ENCODE measurements at regions of chr15 and their contacts with region 1.

Region 1: GRCh38 chr15:58758138-58758537 is 8.6 kb upstream of the ADAM10 start:
- DNase-seq: no peak
- ATAC-seq: no peak
- H3K4me3 ChIP-seq: no peak overlapping the region
- H3K4me3 Mint-ChIP-seq: no peak overlapping the region
- H3K27ac ChIP-seq: no peak overlapping the region
- H3K27ac Mint-ChIP-seq: no peak overlapping the region
- H3K4me1 ChIP-seq: no peaks in the 10 kb centered on the region
- H3K4me1 Mint-ChIP-seq: no peaks in the 10 kb centered on the region
- H3K27me3 ChIP-seq: no peaks in the 10 kb centered on the region
- H3K27me3 Mint-ChIP-seq: peaks cover 2% of the 10 kb centered on the region
- CTCF ChIP-seq: no peak

Region 2: GRCh38 chr15:58269455-58270414 is 488.4 kb before region 1 on chr15:
- CTCF ChIA-PET with region 1: no interaction called
- POLR2A ChIA-PET with region 1: no interaction called
- intact Hi-C with region 1: loop called (anchors 1 to 10 kb)
- DNase-seq: peak in 6 of 9 experiments; percentile 11 to 68 (median 35)
- ATAC-seq: no peak
- H3K4me3 ChIP-seq: no peak overlapping the region
- H3K4me3 Mint-ChIP-seq: no peak overlapping the region
- H3K27ac ChIP-seq: no peak overlapping the region
- H3K27ac Mint-ChIP-seq: no peak overlapping the region
- H3K4me1 ChIP-seq: peaks cover 4% of the 10 kb centered on the region
- H3K4me1 Mint-ChIP-seq: peaks cover 9% of the 10 kb centered on the region
- H3K27me3 ChIP-seq: no peaks in the 10 kb centered on the region
- H3K27me3 Mint-ChIP-seq: no peaks in the 10 kb centered on the region
- CTCF ChIP-seq: peak; percentile 33